Naive thymus-derived CD8-positive, alpha-beta T cell (primary cell): ENCODE measurements at regions of chr16 and their contacts with region 1.

Region 1: GRCh38 chr16:11297492-11298142 is 16.5 kb upstream of the PRM1 start:
- DNase-seq: peak; percentile 31 to 84 (median 70)
- ATAC-seq: peak; percentile 91 to 96
- H3K4me3 Mint-ChIP-seq: peak overlapping the region; percentile 66 to 86 (median 76)
- H3K27ac Mint-ChIP-seq: peak overlapping the region in 9 of 10 donors; percentile 65 to 92 (median 84)
- H3K4me1 Mint-ChIP-seq: peaks cover 14 to 58% (median 47%) of the 10 kb centered on the region in 4 donors
- H3K27me3 Mint-ChIP-seq: peaks cover 0 to 3% (median 2%) of the 10 kb centered on the region in 5 donors

Region 2: DNA sequence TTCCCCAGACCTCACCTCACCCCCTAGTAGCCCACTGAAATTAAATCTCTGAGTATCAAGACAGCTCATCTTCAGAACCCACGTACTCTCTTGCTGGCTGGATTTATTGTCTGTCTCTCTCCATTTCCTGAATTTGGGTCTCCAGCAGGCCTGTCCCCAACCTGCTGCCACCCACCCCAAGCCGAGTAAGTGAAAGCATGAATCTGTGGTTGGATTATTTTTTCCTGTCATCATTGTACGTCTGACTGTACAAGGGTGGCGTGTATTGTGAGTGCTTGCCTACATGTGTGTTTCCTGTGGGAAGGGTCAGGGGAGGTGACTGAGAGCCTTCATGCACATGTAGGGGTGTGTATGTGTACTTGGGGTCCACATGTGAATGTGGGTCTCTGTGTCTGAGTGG is 33.9 kb before region 1 on chr16:
- POLR2A ChIA-PET with region 1: interaction called, 27 read pairs
- DNase-seq: peak in 7 of 10 donors; percentile 12 to 82 (median 67)
- ATAC-seq: peak; percentile 89 to 90
- H3K4me3 Mint-ChIP-seq: peak overlapping the region in 9 of 10 donors; percentile 52 to 83 (median 68)
- H3K27ac Mint-ChIP-seq: peak overlapping the region; percentile 80 to 94 (median 91)
- H3K4me1 Mint-ChIP-seq: peaks cover 19 to 35% (median 34%) of the 10 kb centered on the region in 4 donors
- H3K27me3 Mint-ChIP-seq: no peaks in the 10 kb centered on the region

Region 3: DNA sequence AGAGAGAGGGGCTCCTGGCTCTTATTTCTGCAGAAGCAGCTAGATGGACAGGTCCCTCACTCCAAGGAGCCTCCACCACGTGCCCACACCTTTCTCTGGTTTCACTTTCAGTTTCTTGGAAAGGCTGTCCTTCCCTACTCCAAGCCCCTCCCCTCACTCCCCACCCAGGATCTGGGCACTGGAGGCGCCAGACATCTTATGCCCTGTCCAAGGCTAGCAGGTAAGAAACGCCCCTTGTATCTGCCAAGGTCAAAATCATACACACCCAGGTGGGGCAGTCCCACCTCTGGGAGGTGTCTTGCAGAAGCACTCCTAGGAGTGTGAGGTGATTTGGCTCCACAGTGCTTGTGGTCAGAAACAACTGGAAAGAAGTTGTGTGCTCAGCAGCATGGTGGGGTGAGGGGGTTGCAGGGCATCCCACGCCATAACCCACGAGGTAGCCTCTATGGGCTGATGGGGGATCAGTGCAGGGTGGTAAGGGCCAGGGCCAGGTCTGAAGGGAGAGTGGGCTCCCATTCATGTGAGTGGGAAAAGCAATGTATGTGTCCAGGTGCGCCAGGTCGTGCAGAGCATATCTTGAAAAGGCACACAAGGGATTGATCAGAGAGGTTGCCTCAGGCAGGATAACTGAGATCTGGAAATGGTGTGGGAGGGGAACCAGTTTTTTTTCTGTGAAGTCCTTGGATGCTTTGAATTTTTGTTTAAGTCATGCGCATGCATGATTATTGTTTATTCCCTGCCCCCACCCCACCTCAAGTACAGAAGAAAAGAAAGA is 15.3 kb after region 1 on chr16:
- POLR2A ChIA-PET with region 1: interaction called, 33 read pairs
- DNase-seq: peak in 1 of 10 donors; percentile 12
- ATAC-seq: peak; percentile 18 to 23
- H3K4me3 Mint-ChIP-seq: peak overlapping the region in 8 of 10 donors; percentile 12 to 75 (median 56)
- H3K27ac Mint-ChIP-seq: peak overlapping the region; percentile 71 to 91 (median 84)
- H3K4me1 Mint-ChIP-seq: peaks cover 12 to 61% (median 46%) of the 10 kb centered on the region in 4 donors
- H3K27me3 Mint-ChIP-seq: no peaks in the 10 kb centered on the region

Region 4: GRCh38 chr16:11345040-11345862 is 47.6 kb after region 1 on chr16 and contains the start of gene RMI2:
- POLR2A ChIA-PET with region 1: interaction called, 13 read pairs
- DNase-seq: peak; percentile 90 to 98 (median 95)
- ATAC-seq: peak; percentile 99 to 100
- H3K4me3 Mint-ChIP-seq: peak within 1 kb of the TSS; percentile 84 to 96 (median 90)
- H3K27ac Mint-ChIP-seq: peak within 1 kb of the TSS; percentile 74 to 97 (median 90)
- H3K4me1 Mint-ChIP-seq: peaks cover 8 to 44% (median 20%) of the 10 kb centered on the region in 4 donors
- H3K27me3 Mint-ChIP-seq: no peaks in the 10 kb centered on the region
- polyA plus RNA-seq, gene RMI2: 1.3 to 13.5 (median 7.1) TPM

Region 5: GRCh38 chr16:11356573-11357331 is 59.1 kb after region 1 on chr16:
- POLR2A ChIA-PET with region 1: interaction called, 27 read pairs
- DNase-seq: peak in 9 of 10 donors; percentile 26 to 76 (median 43)
- ATAC-seq: no peak
- H3K4me3 Mint-ChIP-seq: peak overlapping the region in 3 of 10 donors; percentile 13 to 14 (median 14)
- H3K27ac Mint-ChIP-seq: peak overlapping the region in 8 of 10 donors; percentile 15 to 100 (median 82)
- H3K4me1 Mint-ChIP-seq: peaks cover 30 to 63% (median 53%) of the 10 kb centered on the region in 4 donors
- H3K27me3 Mint-ChIP-seq: peaks cover 0 to 18% (median 0%) of the 10 kb centered on the region in 5 donors